MCF 10A (cell line): ENCODE measurements at regions of chr1 and their contacts with region 1.

Region 1: GRCh38 chr1:6523566-6523965 is 30.7 kb downstream of the NOL9 start:
- DNase-seq: peak; percentile 64
- H3K4me3 Mint-ChIP-seq: no peak overlapping the region
- H3K27ac Mint-ChIP-seq: no peak overlapping the region
- H3K4me1 Mint-ChIP-seq: peaks cover 24% of the 10 kb centered on the region
- H3K27me3 Mint-ChIP-seq: no peaks in the 10 kb centered on the region
- CTCF ChIP-seq: peak; percentile 47

Region 2: DNA sequence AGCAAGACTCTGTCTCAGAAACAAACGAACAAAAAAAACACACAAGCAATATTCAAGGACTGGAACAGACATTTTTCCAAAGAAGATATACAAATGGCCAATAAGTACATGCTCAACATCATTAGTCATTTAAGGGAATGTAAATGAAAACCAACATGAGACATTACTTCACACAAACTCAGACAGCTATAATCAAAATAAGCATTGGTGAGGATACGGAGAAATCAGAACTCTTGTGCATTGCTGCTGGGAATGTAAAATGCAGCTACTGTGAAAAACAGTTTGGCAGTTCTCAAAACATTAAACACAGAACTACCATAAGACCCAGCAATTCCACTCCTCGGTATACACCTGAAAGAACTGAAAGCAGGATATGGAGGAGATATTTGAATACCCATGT is 15.4 kb after region 1 on chr1:
- CTCF ChIA-PET with region 1: interaction called, 17 read pairs
- POLR2A ChIA-PET with region 1: interaction called, 7 read pairs
- intact Hi-C with region 1: no loop called
- DNase-seq: no peak
- H3K4me3 Mint-ChIP-seq: no peak overlapping the region
- H3K27ac Mint-ChIP-seq: no peak overlapping the region
- H3K4me1 Mint-ChIP-seq: no peaks in the 10 kb centered on the region
- H3K27me3 Mint-ChIP-seq: no peaks in the 10 kb centered on the region
- CTCF ChIP-seq: no peak